ENCODE measurements at regions of chr22 and their contacts with region 1.

Region 1: GRCh38 chr22:37804881-37805813 is 2.6 kb upstream of the GCAT start:
- DNase-seq: peak; percentile 82 to 94 (median 91)
- H3K4me3 ChIP-seq: peak overlapping the region; percentile 71
- H3K27ac ChIP-seq: peak overlapping the region; percentile 40 to 61
- H3K4me1 ChIP-seq: peaks cover 9% of the 10 kb centered on the region
- H3K27me3 ChIP-seq: no peaks in the 10 kb centered on the region
- CTCF ChIP-seq: peak in 1 of 3 donors; percentile 9
- EP300 ChIP-seq: no peak
- POLR2A ChIP-seq: peak; percentile 76

Region 2: DNA sequence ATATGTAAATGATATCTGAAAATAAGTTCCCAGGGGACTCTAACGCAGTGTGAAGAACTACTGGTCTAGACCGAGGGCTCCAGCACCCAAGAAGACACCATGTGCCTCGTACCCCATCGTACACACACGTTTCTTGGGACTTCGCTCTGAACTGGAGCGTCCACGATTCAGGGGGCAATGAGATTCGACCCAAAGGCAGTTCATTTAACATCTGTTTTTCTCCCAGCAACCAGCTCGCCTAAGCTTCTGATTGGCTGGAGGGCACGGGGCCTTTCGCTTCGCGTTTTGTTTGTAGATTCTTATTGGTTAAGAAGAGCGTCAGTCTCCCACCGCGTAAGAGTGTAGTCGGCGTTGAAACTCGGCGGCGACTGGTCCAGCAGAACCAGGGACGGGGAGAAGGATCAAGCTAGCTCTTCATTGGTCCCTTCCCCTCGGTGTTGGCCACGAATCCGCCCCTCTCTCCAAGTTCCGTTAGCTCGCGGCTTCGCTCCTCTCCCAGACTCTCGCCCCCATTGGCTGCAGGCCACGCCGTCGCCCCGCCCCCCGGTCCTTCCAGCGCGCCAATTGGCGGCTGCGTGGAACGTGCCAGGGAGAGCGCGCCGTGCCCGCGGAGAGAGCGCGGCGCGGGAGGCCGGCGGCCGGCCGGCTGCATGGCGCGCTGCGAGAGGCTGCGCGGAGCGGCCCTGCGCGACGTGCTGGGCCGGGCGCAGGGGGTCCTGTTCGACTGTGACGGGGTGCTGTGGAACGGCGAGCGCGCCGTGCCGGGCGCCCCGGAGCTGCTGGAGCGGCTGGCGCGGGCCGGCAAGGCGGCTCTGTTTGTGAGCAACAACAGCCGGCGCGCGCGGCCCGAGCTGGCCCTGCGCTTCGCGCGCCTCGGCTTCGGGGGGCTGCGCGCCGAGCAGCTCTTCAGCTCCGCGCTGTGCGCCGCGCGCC is 146.7 kb before region 1 on chr22 and contains the start of gene PDXP:
- intact Hi-C with region 1: loop called in 1 of 4 experiments (anchors 5 kb)
- DNase-seq: peak; percentile 99 to 100 (median 100)
- H3K4me3 ChIP-seq: peak within 1 kb of the TSS; percentile 62
- H3K27ac ChIP-seq: peak within 1 kb of the TSS in 1 of 2 donors; percentile 71
- H3K4me1 ChIP-seq: peaks cover 8% of the 10 kb centered on the region
- H3K27me3 ChIP-seq: no peaks in the 10 kb centered on the region
- CTCF ChIP-seq: no peak
- EP300 ChIP-seq: no peak
- POLR2A ChIP-seq: peak; percentile 74
- total RNA-seq, gene PDXP: 9.1 to 15.9 (median 12.7) TPM

Measured in ovary (tissue), 10 donors.